Activated CD4-positive, alpha-beta T cell treated with anti-CD3 and anti-CD28 coated beads for 36 hours (primary cell): ENCODE measurements at regions of chr17 and their contacts with region 1.

Region 1: GRCh38 chr17:60094754-60095153 is 16.0 kb upstream of the HEATR6 start:
- DNase-seq: no peak
- ATAC-seq: no peak
- H3K4me3 Mint-ChIP-seq: no peak overlapping the region
- H3K27ac Mint-ChIP-seq: no peak overlapping the region
- H3K4me1 Mint-ChIP-seq: no peaks in the 10 kb centered on the region
- H3K27me3 Mint-ChIP-seq: peaks cover 14% of the 10 kb centered on the region

Region 2: GRCh38 chr17:60149691-60150582 is 55.2 kb after region 1 on chr17 and contains the start of gene CA4:
- CTCF ChIA-PET with region 1: no interaction called
- POLR2A ChIA-PET with region 1: no interaction called
- intact Hi-C with region 1: loop called in 1 of 2 experiments (anchors 5 kb)
- DNase-seq: no peak
- ATAC-seq: peak; percentile 27
- H3K4me3 Mint-ChIP-seq: peak within 1 kb of the TSS; percentile 32
- H3K27ac Mint-ChIP-seq: no peak within 1 kb of the TSS
- H3K4me1 Mint-ChIP-seq: peaks cover 12% of the 10 kb centered on the region
- H3K27me3 Mint-ChIP-seq: peaks cover 55% of the 10 kb centered on the region
- total RNA-seq, gene CA4: not detected

Region 3: DNA sequence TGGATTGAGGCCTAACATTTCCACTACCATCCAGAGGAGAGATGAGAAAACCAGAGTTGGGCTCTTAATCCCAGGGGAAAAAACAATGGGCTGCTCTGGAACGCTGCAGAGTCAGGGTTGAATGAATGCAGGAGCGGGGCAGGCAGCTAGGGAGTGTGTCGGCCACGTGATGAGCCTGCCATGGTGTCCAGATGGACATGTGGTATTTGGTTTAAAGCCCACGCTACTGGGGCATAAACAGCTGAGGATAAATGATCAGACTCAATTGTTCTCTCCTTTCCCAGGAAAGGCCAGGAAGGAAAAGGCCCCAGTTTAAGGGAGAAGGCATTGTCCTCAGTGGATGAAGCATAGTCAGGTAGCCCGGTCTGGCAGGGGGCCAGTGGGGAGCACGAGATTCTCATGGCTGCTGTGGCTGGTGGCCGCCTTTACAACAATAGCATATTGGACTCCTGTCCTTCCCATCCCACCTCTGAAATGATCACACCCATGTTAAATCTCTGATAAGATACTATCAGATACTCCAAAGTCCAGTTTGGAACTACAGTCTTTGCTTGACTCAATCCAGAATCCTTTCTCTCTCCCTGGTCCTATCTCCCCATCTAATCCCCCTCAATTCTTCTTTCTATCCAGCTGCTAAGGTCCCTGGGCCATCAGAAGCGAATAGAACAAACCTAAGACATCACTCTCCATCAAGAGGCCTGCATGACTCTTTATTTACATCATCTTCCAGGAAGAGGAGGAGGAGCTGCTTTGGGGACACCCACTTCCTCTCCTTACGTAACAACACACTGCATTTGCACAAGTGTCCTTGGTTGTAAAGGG is 75.4 kb after region 1 on chr17:
- CTCF ChIA-PET with region 1: no interaction called
- POLR2A ChIA-PET with region 1: no interaction called
- intact Hi-C with region 1: no loop called
- DNase-seq: peak; percentile 32
- ATAC-seq: peak; percentile 51
- H3K4me3 Mint-ChIP-seq: no peak overlapping the region
- H3K27ac Mint-ChIP-seq: peak overlapping the region; percentile 79
- H3K4me1 Mint-ChIP-seq: peaks cover 26% of the 10 kb centered on the region
- H3K27me3 Mint-ChIP-seq: no peaks in the 10 kb centered on the region

Region 4: GRCh38 chr17:60188759-60189158 is 94.0 kb after region 1 on chr17:
- CTCF ChIA-PET with region 1: no interaction called
- POLR2A ChIA-PET with region 1: no interaction called
- intact Hi-C with region 1: no loop called
- DNase-seq: no peak
- ATAC-seq: no peak
- H3K4me3 Mint-ChIP-seq: no peak overlapping the region
- H3K27ac Mint-ChIP-seq: no peak overlapping the region
- H3K4me1 Mint-ChIP-seq: no peaks in the 10 kb centered on the region
- H3K27me3 Mint-ChIP-seq: no peaks in the 10 kb centered on the region